MCF 10A (cell line): ENCODE measurements at regions of chr15 and their contacts with region 1.

Region 1: DNA sequence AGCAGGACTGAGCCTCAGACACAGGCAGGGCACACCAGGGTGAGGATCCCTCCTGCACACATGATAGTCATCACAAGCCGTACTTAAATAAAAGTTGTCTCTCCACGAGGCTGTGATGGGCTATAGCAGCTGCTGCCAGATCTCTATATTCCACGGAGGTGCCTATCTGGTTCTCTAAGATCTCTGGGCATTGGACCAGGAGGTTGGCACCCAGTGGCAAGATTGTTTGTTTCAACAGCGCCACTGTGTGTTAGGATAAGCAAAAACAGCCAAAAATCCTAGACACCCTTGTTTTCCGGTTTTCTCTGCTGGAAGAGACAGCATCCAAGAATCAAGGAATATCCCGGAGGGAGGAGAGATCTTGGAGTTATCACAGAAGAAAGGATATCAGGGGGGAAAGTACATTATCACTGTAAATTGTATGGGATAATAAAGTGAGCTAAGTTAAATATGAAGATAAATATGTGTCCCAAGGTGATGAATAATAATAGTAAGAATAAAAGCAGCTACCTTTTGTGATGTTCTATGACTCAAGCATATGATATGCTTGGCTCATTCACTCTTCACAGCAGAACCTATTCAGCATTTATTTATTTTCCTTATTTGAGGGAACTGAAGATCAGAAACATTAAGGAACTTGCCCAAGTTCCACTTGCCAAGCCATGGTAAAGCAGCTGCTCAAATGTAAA is 90.6 kb upstream of the AKAP13 start:
- DNase-seq: peak; percentile 84
- H3K4me3 Mint-ChIP-seq: no peak overlapping the region
- H3K27ac Mint-ChIP-seq: no peak overlapping the region
- H3K4me1 Mint-ChIP-seq: peaks cover 6% of the 10 kb centered on the region
- H3K27me3 Mint-ChIP-seq: no peaks in the 10 kb centered on the region
- CTCF ChIP-seq: peak; percentile 65

Region 2: GRCh38 chr15:84955089-84955848 is 334.6 kb before region 1 on chr15:
- CTCF ChIA-PET with region 1: no interaction called
- POLR2A ChIA-PET with region 1: no interaction called
- intact Hi-C with region 1: loop called (anchors 5 kb)
- DNase-seq: peak; percentile 73
- H3K4me3 Mint-ChIP-seq: no peak overlapping the region
- H3K27ac Mint-ChIP-seq: no peak overlapping the region
- H3K4me1 Mint-ChIP-seq: no peaks in the 10 kb centered on the region
- H3K27me3 Mint-ChIP-seq: no peaks in the 10 kb centered on the region
- CTCF ChIP-seq: peak; percentile 74

Region 3: DNA sequence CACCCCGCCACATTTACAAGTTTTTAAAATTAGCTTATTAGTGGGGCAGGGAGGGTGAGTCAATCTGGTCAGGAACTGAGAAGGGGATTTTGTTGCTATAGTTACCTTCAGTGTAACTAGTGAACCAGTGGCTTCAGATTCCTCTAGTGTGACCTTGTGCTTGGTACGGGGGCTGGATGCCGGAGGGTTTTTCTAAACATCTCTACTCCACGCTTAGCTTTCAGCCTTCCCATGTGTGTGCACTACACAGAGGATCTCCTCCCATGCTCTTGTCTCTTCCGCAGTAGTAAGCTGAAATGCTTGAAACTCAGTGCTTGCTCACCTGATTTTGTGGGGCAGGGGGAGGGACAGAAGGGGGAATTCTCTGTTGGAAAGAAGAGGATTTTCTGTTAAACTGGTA is 22.7 kb after region 1 on chr15:
- CTCF ChIA-PET with region 1: interaction called, 11 read pairs
- POLR2A ChIA-PET with region 1: no interaction called
- intact Hi-C with region 1: no loop called
- DNase-seq: no peak
- H3K4me3 Mint-ChIP-seq: no peak overlapping the region
- H3K27ac Mint-ChIP-seq: no peak overlapping the region
- H3K4me1 Mint-ChIP-seq: peaks cover 13% of the 10 kb centered on the region
- H3K27me3 Mint-ChIP-seq: no peaks in the 10 kb centered on the region
- CTCF ChIP-seq: no peak